ENCODE measurements at regions of chr3 and their contacts with region 1.

Region 1: GRCh38 chr3:11803977-11804892 is 42.5 kb downstream of the TAMM41 start:
- DNase-seq: peak in 1 of 2 donors; percentile 16
- ATAC-seq: peak in 5 of 8 donors; percentile 58 to 85 (median 76)
- H3K4me3 ChIP-seq: no peak overlapping the region
- H3K27ac ChIP-seq: no peak overlapping the region
- H3K4me1 ChIP-seq: no peaks in the 10 kb centered on the region
- H3K27me3 ChIP-seq: no peaks in the 10 kb centered on the region
- CTCF ChIP-seq: peak; percentile 46 to 83 (median 73)

Region 2: DNA sequence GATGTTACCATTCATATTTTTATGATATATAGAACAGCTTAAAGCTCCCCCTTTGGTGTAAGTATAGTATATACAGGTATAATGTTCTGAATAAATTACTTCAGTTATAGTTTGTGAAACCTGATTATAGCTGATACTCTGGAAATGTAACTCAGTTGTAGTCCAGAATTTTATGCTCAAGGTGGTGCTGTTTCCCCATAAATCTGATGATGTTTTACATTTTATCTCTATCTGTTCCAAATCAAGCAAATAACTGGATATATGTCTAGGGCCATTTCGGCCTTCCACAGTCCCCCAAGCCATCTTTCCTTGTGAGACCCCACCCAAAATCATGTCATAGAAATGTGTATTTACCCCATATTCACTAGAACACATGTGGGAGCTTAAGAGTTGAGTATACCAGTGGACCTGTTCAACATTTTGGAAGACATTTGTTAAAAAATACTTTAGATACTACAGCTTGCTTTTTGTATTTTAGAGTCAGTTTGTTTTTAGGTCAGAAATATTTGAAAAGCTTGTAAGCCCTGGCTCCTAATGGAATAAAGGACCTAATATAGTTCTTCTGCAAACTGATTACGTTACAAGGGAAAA is 424.9 kb before region 1 on chr3:
- intact Hi-C with region 1: loop called (anchors 2 to 10 kb)
- DNase-seq: no peak
- ATAC-seq: peak in 7 of 8 donors; percentile 38 to 77 (median 69)
- H3K4me3 ChIP-seq: no peak overlapping the region
- H3K27ac ChIP-seq: no peak overlapping the region
- H3K4me1 ChIP-seq: peaks cover 0 to 17% (median 4%) of the 10 kb centered on the region in 9 donors
- H3K27me3 ChIP-seq: no peaks in the 10 kb centered on the region
- CTCF ChIP-seq: peak; percentile 42 to 78 (median 62)